GM12878 (cell line): ENCODE measurements at regions of chr9 and their contacts with region 1.

Region 1: GRCh38 chr9:5886114-5886939 is 4.4 kb upstream of the MLANA start:
- DNase-seq: peak; percentile 40
- ATAC-seq: peak; percentile 100
- H3K4me3 ChIP-seq: no peak overlapping the region
- H3K27ac ChIP-seq: no peak overlapping the region
- H3K4me1 ChIP-seq: no peaks in the 10 kb centered on the region
- H3K27me3 ChIP-seq: no peaks in the 10 kb centered on the region
- CTCF ChIP-seq: peak; percentile 95 to 96 (median 95); a peak in 5 of 6 replicates
- EP300 ChIP-seq: no peak
- POLR2A ChIP-seq: no peak
- RAD21 ChIP-seq: peak; percentile 98

Region 2: GRCh38 chr9:5617749-5618148 is 268.6 kb before region 1 on chr9:
- CTCF ChIA-PET with region 1: no interaction called
- POLR2A ChIA-PET with region 1: no interaction called
- RAD21 ChIA-PET with region 1: no interaction called
- SMC1A ChIA-PET with region 1: no interaction called
- in situ Hi-C with region 1: no loop called
- intact Hi-C with region 1: no loop called
- DNase-seq: peak; percentile 92
- ATAC-seq: peak; percentile 96
- H3K4me3 ChIP-seq: peak overlapping the region; percentile 21; the same call in 1 of the 2 replicates
- H3K27ac ChIP-seq: peak overlapping the region; percentile 90
- H3K4me1 ChIP-seq: peaks cover 18% of the 10 kb centered on the region
- H3K27me3 ChIP-seq: no peaks in the 10 kb centered on the region
- CTCF ChIP-seq: no peak
- EP300 ChIP-seq: peak in 1 of 2 experiments; percentile 65; a peak in 2 of 4 replicates
- POLR2A ChIP-seq: no peak
- RAD21 ChIP-seq: no peak

Region 3: GRCh38 chr9:5799314-5799713 is 87.0 kb before region 1 on chr9:
- CTCF ChIA-PET with region 1: interaction called, 12 read pairs
- POLR2A ChIA-PET with region 1: interaction called, 3 read pairs
- RAD21 ChIA-PET with region 1: interaction called, 4 read pairs
- SMC1A ChIA-PET with region 1: interaction called, 4 read pairs
- in situ Hi-C with region 1: no loop called
- intact Hi-C with region 1: no loop called
- DNase-seq: no peak
- ATAC-seq: peak; percentile 41; the same call in 1 of the 3 replicates
- H3K4me3 ChIP-seq: no peak overlapping the region
- H3K27ac ChIP-seq: no peak overlapping the region
- H3K4me1 ChIP-seq: no peaks in the 10 kb centered on the region
- H3K27me3 ChIP-seq: no peaks in the 10 kb centered on the region
- CTCF ChIP-seq: peak; percentile 48 to 65 (median 54); a peak in 5 of 6 replicates
- EP300 ChIP-seq: no peak
- POLR2A ChIP-seq: no peak
- RAD21 ChIP-seq: peak; percentile 64

Region 4: GRCh38 chr9:5869315-5870019 is 16.9 kb before region 1 on chr9:
- CTCF ChIA-PET with region 1: interaction called, 14 read pairs
- POLR2A ChIA-PET with region 1: interaction called, 6 read pairs
- RAD21 ChIA-PET with region 1: interaction called, 5 read pairs
- SMC1A ChIA-PET with region 1: interaction called, 6 read pairs
- in situ Hi-C with region 1: no loop called
- intact Hi-C with region 1: no loop called
- DNase-seq: no peak
- ATAC-seq: peak; percentile 69
- H3K4me3 ChIP-seq: no peak overlapping the region
- H3K27ac ChIP-seq: no peak overlapping the region
- H3K4me1 ChIP-seq: no peaks in the 10 kb centered on the region
- H3K27me3 ChIP-seq: no peaks in the 10 kb centered on the region
- CTCF ChIP-seq: peak in 2 of 3 experiments; percentile 57 to 65; a peak in 5 of 6 replicates
- EP300 ChIP-seq: no peak
- POLR2A ChIP-seq: no peak
- RAD21 ChIP-seq: peak; percentile 48

Region 5: GRCh38 chr9:5949103-5949699 is 62.9 kb after region 1 on chr9:
- CTCF ChIA-PET with region 1: interaction called, 14 read pairs
- POLR2A ChIA-PET with region 1: no interaction called
- RAD21 ChIA-PET with region 1: interaction called, 10 read pairs
- SMC1A ChIA-PET with region 1: interaction called, 11 read pairs
- in situ Hi-C with region 1: no loop called
- intact Hi-C with region 1: no loop called
- DNase-seq: peak; percentile 15
- ATAC-seq: peak; percentile 79
- H3K4me3 ChIP-seq: peak overlapping the region; percentile 26; the same call in 1 of the 2 replicates
- H3K27ac ChIP-seq: peak overlapping the region; percentile 43
- H3K4me1 ChIP-seq: 0 out of 2 replicates have a peak, but pooled peaks cover 3% of the 10 kb centered on the region
- H3K27me3 ChIP-seq: no peaks in the 10 kb centered on the region
- CTCF ChIP-seq: no peak
- EP300 ChIP-seq: no peak
- POLR2A ChIP-seq: no peak
- RAD21 ChIP-seq: no peak

Region 6: DNA sequence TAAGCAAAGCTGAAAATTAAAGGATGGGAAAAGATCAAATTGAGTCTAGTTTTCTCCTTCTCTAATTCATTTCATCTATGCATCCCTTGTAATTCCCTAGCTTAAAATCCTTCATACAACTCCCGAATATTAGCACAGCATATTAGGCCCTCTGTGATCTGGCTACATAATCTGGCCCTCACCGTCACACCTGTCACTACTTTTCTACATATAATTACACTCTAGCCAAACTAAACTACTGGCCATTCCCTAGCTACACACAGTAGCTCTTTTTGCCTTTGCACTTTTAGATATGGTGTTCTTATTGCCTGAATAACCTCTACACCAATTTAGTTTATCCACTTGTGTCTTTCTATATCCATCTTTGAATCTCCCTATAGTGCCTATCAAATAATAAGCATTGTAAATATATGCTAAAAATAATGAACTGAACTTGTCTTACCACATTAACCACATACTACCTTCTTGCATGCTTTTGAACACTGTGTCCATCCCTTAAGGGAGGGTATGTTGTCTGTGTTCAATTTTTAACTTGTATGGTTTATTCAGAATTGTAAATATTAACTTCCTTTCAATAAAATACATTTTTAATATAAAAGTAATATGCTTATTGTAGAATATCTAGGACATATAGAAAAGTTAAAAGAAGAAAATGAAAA is 113.2 kb after region 1 on chr9:
- CTCF ChIA-PET with region 1: interaction called, 10 read pairs
- POLR2A ChIA-PET with region 1: no interaction called
- RAD21 ChIA-PET with region 1: interaction called, 5 read pairs
- SMC1A ChIA-PET with region 1: interaction called, 7 read pairs
- in situ Hi-C with region 1: no loop called
- intact Hi-C with region 1: no loop called
- DNase-seq: no peak
- ATAC-seq: peak; percentile 56
- H3K4me3 ChIP-seq: no peak overlapping the region
- H3K27ac ChIP-seq: no peak overlapping the region
- H3K4me1 ChIP-seq: no peaks in the 10 kb centered on the region; the same call in 1 of the 2 replicates
- H3K27me3 ChIP-seq: no peaks in the 10 kb centered on the region
- CTCF ChIP-seq: no peak
- EP300 ChIP-seq: no peak
- POLR2A ChIP-seq: no peak
- RAD21 ChIP-seq: no peak

Region 7: GRCh38 chr9:6029604-6030274 is 143.4 kb after region 1 on chr9:
- CTCF ChIA-PET with region 1: interaction called, 23 read pairs
- POLR2A ChIA-PET with region 1: no interaction called
- RAD21 ChIA-PET with region 1: interaction called, 3 read pairs
- SMC1A ChIA-PET with region 1: interaction called, 18 read pairs
- in situ Hi-C with region 1: no loop called
- intact Hi-C with region 1: no loop called
- DNase-seq: no peak
- ATAC-seq: no peak; the same call in 1 of the 3 replicates
- H3K4me3 ChIP-seq: no peak overlapping the region
- H3K27ac ChIP-seq: no peak overlapping the region
- H3K4me1 ChIP-seq: no peaks in the 10 kb centered on the region
- H3K27me3 ChIP-seq: no peaks in the 10 kb centered on the region
- CTCF ChIP-seq: no peak
- EP300 ChIP-seq: no peak
- POLR2A ChIP-seq: no peak
- RAD21 ChIP-seq: no peak

Region 8: GRCh38 chr9:7799234-7799943 is 1913.1 kb after region 1 on chr9 and contains the start of gene DMAC1:
- CTCF ChIA-PET with region 1: no interaction called
- POLR2A ChIA-PET with region 1: no interaction called
- RAD21 ChIA-PET with region 1: no interaction called
- SMC1A ChIA-PET with region 1: no interaction called
- in situ Hi-C with region 1: loop called (anchors 25 kb)
- intact Hi-C with region 1: no loop called
- DNase-seq: peak; percentile 41
- ATAC-seq: peak; percentile 97
- H3K4me3 ChIP-seq: peak within 1 kb of the TSS; percentile 78
- H3K27ac ChIP-seq: peak within 1 kb of the TSS; percentile 87
- H3K4me1 ChIP-seq: no peaks in the 10 kb centered on the region
- H3K27me3 ChIP-seq: no peaks in the 10 kb centered on the region
- CTCF ChIP-seq: no peak
- EP300 ChIP-seq: no peak
- POLR2A ChIP-seq: peak; percentile 88
- RAD21 ChIP-seq: no peak
- polyA plus RNA-seq, gene DMAC1: 25.5 to 55.4 TPM